Cardiac septum (tissue), 1 donor: ENCODE measurements at regions of chr15 and their contacts with region 1.

Region 1: GRCh38 chr15:92383519-92384326 is 10.0 kb upstream of the ST8SIA2 start:
- DNase-seq: no peak

Region 2: DNA sequence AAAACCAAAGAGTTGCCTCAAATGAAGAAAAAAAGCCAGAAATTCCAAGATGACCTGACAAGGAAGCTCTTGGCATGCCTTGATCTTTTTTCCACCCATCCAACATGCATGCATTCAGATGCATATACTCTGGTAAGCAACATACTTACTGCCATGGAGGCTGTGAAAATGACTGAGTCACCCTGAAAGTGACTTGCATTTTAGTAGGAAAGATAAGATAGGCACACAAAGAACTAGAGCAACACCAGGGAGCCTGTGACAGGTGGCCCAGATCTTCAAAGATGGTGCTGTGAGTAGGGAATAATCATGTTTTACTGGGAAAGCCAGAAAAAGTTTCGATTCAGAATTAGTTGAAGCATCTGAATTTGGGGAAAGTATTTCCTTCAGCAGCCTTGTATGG is 715.4 kb before region 1 on chr15:
- intact Hi-C with region 1: no loop called
- DNase-seq: no peak

Region 3: DNA sequence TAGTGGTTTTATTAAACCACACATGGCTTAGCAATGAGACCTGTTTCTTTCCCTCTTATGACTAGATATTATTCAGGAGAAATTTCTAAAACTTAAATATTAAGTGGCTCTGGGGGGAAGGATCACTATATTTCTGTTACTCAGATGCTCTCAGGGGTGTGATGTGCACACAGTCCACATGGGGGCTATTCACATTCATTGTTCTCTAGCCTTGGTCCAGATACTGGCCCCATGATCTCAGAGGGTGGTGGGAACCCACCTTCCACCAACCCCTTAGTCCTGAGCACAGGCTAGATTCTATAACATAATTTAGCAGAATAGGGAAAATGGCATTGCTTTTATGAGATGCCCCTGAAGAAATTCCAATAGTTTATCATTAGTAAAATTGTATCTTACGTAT is 139.0 kb before region 1 on chr15:
- intact Hi-C with region 1: no loop called
- DNase-seq: no peak

Region 4: DNA sequence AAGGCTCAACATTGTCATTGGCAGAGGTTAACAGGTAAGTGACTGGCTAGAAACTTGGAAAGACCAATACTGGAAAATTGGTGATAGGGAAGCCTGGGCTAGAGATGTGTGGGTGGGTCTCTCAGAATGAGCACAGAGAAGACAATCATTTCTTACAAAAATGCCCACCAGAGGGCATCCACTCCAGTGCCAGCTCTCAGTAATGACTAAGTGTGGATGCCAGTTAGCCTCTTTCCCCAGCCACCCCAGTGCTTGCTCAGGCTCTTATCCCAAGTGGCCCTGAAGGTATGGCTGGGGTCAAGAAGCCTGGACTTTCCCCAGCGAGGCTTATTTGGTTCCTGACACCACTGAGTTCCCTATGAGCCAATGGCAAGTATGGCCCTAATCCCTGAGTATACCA is 105.9 kb before region 1 on chr15:
- intact Hi-C with region 1: loop called (anchors 5 kb)
- DNase-seq: no peak